PC-3 (cell line): ENCODE measurements at regions of chr17 and their contacts with region 1.

Region 1: GRCh38 chr17:43979671-43980070 is 24.8 kb upstream of the NAGS start:
- DNase-seq: no peak
- ATAC-seq: no peak
- H3K4me3 ChIP-seq: no peak overlapping the region
- H3K27ac ChIP-seq: no peak overlapping the region
- H3K4me1 ChIP-seq: no peaks in the 10 kb centered on the region
- H3K27me3 ChIP-seq: peaks cover 53% of the 10 kb centered on the region
- CTCF ChIP-seq: no peak

Region 2: DNA sequence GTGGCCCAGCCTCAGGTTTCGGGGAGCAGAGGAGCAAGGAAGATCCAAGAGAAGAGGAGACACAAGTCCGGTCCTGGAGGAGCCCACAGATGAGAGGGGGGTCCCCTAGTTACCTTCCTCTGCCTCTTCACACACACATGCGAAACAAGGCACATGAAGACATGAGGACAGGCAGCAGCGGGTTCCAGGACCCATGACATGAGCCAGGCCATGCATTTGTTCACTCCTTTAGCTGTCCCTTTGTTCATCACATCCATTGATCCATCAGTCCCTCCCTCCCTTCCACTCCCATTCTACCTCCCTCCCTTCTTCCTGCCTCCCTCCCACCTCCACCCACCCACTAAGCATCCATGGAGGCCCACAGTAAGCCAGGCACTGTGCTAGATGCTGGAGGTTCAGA is 46.7 kb before region 1 on chr17:
- CTCF ChIA-PET with region 1: interaction called, 10 read pairs
- POLR2A ChIA-PET with region 1: no interaction called
- intact Hi-C with region 1: no loop called
- DNase-seq: no peak
- ATAC-seq: no peak
- H3K4me3 ChIP-seq: no peak overlapping the region
- H3K27ac ChIP-seq: no peak overlapping the region
- H3K4me1 ChIP-seq: peaks cover 4% of the 10 kb centered on the region; the same call in 1 of the 2 replicates
- H3K27me3 ChIP-seq: no peaks in the 10 kb centered on the region
- CTCF ChIP-seq: no peak

Region 3: DNA sequence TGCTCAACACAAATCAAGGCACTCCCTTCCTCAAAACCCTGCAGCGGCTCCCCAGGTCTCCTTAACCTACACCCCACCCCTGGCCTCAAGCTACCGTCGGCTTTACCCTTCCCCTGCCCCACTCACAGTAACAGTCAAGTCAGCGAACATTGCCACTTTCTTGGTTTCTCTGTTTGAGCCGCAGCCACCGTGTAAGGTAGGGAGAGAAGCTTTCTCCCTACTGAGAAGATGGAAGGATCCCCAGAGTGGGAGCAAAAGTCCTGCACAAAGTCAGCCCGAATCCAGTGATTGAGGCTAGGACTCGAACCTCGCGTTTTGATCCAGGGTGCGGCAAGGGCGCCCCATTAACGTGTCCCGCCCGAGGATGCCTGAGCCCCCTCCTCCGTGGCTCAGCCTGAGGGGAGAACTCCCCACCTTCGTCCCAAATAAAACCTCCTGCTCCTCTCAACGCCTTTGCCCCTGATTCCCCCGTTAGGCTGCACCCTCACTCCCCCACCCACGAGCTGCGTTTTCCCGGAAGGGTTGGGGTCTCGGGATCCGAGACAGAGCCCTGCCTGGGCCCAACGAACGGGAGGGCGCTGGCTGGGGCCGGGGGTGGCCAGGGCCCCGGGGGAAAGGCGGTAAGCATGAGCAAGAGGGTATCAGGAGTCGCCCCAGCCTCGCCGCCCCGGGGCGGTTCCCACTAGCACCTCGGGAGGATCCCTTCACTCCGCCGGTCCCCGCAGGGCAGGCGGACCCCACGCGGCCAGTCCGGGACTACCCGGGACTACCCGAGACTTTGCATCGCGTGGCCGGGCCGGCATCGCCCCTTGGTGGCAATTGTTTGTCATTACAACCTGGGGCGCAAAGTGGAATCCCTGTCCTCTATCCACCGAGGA is 14.8 kb after region 1 on chr17:
- CTCF ChIA-PET with region 1: no interaction called
- POLR2A ChIA-PET with region 1: no interaction called
- intact Hi-C with region 1: no loop called
- DNase-seq: peak; percentile 87
- ATAC-seq: peak; percentile 90
- H3K4me3 ChIP-seq: peak overlapping the region; percentile 70
- H3K27ac ChIP-seq: no peak overlapping the region
- H3K4me1 ChIP-seq: peaks cover 10% of the 10 kb centered on the region; the same call in 1 of the 2 replicates
- H3K27me3 ChIP-seq: no peaks in the 10 kb centered on the region
- CTCF ChIP-seq: peak; percentile 97